ENCODE measurements at regions of chr22 and their contacts with region 1.

Region 1: DNA sequence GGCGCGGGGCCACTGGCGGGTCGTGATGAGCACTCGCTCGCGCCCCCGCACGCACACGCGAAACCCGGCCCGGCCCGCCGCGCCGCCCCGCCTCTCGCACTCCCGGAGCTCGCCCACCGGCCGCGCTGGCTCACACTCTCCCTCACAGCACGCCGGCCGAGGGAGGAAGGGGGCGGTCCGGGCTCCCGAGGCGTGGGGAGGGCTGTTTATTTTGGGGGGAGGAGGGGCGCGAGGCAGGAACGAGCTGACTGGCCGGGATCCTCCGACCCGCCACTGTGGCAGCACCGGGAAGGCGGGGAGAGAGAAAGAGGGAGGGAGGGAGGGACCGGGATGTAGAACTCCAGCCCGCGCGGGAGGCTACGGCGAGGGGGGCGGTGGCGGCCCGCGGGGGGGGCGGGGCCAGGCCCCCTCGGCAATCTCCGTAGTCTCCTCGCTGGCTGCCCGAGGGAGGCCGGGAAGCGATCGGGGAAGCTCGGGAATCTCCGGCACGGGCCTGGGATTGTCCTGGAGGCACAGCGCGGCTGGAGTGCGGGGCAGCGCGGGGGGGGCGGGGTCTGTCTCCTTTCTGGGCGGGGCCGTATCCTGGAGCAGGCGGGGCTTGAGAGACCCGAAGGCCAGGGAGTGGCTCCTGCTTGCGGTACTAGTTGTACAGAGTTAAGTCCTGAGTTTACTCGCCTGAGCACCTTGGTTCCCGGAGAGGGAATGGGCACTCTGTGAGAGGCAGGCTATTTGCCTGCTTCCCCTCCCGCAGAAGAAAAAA is at the start of gene RBFOX2:
- DNase-seq: peak; percentile 98 to 99 (median 99)
- ATAC-seq: peak; percentile 97
- H3K4me3 ChIP-seq: peak within 1 kb of the TSS; percentile 86
- H3K27ac ChIP-seq: peak within 1 kb of the TSS; percentile 94
- H3K4me1 ChIP-seq: no peaks in the 10 kb centered on the region
- H3K27me3 ChIP-seq: no peaks in the 10 kb centered on the region
- total RNA-seq, gene RBFOX2: 67.4 to 89.8 (median 73.8) TPM

Region 2: DNA sequence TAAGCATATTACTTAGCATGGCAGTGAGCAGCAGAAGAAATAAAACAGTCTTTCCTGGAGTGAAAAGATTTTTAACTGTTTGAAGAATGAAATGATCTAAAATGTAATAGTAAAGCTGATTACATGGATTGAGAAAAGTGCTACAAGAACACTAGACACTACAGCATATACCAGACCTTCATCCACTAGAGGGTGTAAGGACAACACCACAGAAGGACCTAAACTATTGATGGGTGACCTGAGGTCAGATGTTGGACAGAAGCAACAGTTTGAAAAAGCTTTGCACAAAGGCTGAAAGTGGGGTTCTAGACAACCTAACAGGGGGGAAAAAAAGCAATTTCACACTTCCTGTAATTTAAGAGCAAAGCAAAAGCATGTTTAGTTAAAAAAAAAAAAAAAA is 97.9 kb before region 1 on chr22:
- intact Hi-C with region 1: loop called in 1 of 4 experiments (anchors 10 kb)
- DNase-seq: no peak
- ATAC-seq: peak; percentile 93 to 94
- H3K4me3 ChIP-seq: no peak overlapping the region
- H3K27ac ChIP-seq: no peak overlapping the region
- H3K4me1 ChIP-seq: peaks cover 1% of the 10 kb centered on the region
- H3K27me3 ChIP-seq: no peaks in the 10 kb centered on the region

Region 3: GRCh38 chr22:35961480-35962295 is 67.1 kb before region 1 on chr22:
- intact Hi-C with region 1: loop called in 1 of 4 experiments (anchors 10 kb)
- DNase-seq: peak; percentile 51 to 65 (median 60)
- ATAC-seq: peak; percentile 92 to 98
- H3K4me3 ChIP-seq: no peak overlapping the region
- H3K27ac ChIP-seq: peak overlapping the region; percentile 85
- H3K4me1 ChIP-seq: no peaks in the 10 kb centered on the region
- H3K27me3 ChIP-seq: no peaks in the 10 kb centered on the region

Region 4: DNA sequence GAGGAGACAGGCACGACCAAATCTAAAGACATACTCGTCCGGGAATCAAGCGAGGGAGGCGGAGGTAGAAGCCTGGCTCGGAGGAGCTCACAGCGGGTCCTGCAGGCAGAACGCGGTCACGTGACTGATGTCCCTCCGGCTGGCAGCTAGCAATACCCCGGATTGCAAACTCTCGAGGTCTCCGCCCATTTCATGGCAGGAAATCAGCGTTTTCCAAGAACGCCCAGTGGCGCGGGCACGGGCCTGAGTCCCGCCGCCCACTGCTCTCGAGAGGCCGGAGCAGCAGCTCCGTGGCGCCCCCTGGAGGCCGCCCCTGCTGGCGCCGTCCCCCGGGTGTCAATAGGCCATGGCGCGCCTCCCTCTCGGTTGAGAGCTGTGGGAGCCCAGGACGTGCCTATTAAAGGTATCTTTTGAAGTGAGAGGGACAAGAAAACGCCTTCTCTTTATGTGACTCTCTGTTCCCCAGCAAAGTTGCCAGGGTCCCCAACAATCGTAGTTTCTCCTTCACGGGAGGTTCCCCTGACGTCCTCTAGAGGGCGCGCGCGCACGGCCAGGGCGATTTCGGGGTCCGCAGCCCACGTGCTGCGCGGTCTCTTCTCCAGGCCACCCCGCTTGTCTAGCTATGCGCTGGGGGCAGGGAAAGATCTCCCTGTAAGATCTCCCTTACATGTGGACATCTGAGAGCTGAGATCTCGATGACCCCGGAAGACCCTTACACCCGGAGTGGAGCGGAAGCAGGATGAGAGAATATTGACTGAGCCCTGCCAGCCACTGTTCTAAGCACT is 37.1 kb after region 1 on chr22:
- intact Hi-C with region 1: loop called in 1 of 4 experiments (anchors 5 kb)
- DNase-seq: peak; percentile 95 to 97 (median 96)
- ATAC-seq: peak; percentile 95
- H3K4me3 ChIP-seq: peak overlapping the region; percentile 47
- H3K27ac ChIP-seq: peak overlapping the region; percentile 88
- H3K4me1 ChIP-seq: no peaks in the 10 kb centered on the region
- H3K27me3 ChIP-seq: no peaks in the 10 kb centered on the region

Measured in right cardiac atrium (tissue), 5 donors.